GM12878 (cell line): ENCODE measurements at regions of chr19 and their contacts with region 1.

Region 1: DNA sequence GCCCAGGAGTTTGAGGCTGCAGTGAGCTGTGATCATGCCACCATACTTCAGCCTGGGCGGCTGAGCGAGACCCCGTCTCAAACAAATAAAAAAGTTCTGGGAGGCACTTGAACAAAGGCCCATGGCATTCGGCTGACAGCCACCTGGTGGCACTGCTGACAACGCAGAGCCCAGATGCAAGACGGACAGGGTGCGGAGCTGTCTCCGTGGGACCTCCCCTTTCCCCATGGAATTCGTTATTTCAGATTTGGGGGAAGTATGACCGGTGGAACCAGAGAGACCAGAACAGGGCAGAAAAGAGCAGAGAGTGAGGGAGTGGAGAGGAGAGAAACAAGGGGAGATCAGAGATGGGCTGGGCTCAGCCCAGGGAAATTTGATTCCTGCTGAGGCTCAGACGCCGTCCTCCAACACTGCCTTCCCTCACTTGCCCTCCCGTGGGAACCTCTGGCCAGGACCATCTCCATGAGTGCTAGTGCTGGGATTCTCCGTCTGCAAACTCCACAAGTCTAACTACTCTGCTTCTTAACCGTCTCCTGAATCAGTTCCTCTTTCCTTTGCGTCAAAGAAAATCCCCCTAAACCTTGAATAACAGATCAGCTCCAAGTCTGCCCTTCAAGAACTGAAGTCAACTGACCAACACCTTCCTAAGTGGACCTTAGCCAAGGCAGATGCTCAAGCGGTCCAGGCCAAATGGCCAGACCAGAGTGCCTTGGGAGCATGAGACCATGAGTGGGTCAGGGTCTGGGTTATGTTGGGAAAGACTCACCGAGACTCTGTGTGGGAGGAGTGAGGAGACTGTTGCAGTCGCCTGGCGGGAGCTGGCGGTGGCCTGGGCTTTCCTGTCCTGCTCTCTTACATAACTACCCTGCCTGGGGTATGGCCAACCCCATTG is 11.9 kb upstream of the ATF5 start:
- DNase-seq: no peak
- ATAC-seq: peak; percentile 45
- H3K4me3 ChIP-seq: no peak overlapping the region
- H3K27ac ChIP-seq: peak overlapping the region; percentile 67
- H3K4me1 ChIP-seq: peaks cover 43% of the 10 kb centered on the region
- H3K27me3 ChIP-seq: no peaks in the 10 kb centered on the region
- CTCF ChIP-seq: peak; percentile 17 to 46 (median 28); a peak in 2 of 6 replicates
- EP300 ChIP-seq: no peak
- POLR2A ChIP-seq: no peak
- RAD21 ChIP-seq: no peak

Region 2: GRCh38 chr19:49701271-49701786 is 215.8 kb before region 1 on chr19:
- CTCF ChIA-PET with region 1: no interaction called
- POLR2A ChIA-PET with region 1: no interaction called
- RAD21 ChIA-PET with region 1: no interaction called
- SMC1A ChIA-PET with region 1: no interaction called
- in situ Hi-C with region 1: no loop called
- intact Hi-C with region 1: no loop called
- DNase-seq: no peak
- ATAC-seq: no peak
- H3K4me3 ChIP-seq: no peak overlapping the region
- H3K27ac ChIP-seq: no peak overlapping the region
- H3K4me1 ChIP-seq: no peaks in the 10 kb centered on the region
- H3K27me3 ChIP-seq: no peaks in the 10 kb centered on the region
- CTCF ChIP-seq: no peak
- EP300 ChIP-seq: no peak
- POLR2A ChIP-seq: no peak
- RAD21 ChIP-seq: no peak

Region 3: GRCh38 chr19:49712397-49712859 is 204.7 kb before region 1 on chr19:
- CTCF ChIA-PET with region 1: no interaction called
- POLR2A ChIA-PET with region 1: no interaction called
- RAD21 ChIA-PET with region 1: no interaction called
- SMC1A ChIA-PET with region 1: no interaction called
- in situ Hi-C with region 1: no loop called
- intact Hi-C with region 1: no loop called
- DNase-seq: no peak
- ATAC-seq: no peak
- H3K4me3 ChIP-seq: no peak overlapping the region
- H3K27ac ChIP-seq: no peak overlapping the region
- H3K4me1 ChIP-seq: no peaks in the 10 kb centered on the region
- H3K27me3 ChIP-seq: no peaks in the 10 kb centered on the region
- CTCF ChIP-seq: no peak
- EP300 ChIP-seq: no peak
- POLR2A ChIP-seq: no peak
- RAD21 ChIP-seq: no peak

Region 4: GRCh38 chr19:49896863-49897621 is 20.0 kb before region 1 on chr19 and contains the start of gene IL4I1:
- CTCF ChIA-PET with region 1: interaction called, 71 read pairs
- POLR2A ChIA-PET with region 1: interaction called, 116 read pairs
- RAD21 ChIA-PET with region 1: interaction called, 38 read pairs
- SMC1A ChIA-PET with region 1: interaction called, 110 read pairs
- in situ Hi-C with region 1: no loop called
- intact Hi-C with region 1: no loop called
- DNase-seq: peak; percentile 96
- ATAC-seq: peak; percentile 57
- H3K4me3 ChIP-seq: peak within 1 kb of the TSS; percentile 77
- H3K27ac ChIP-seq: peak within 1 kb of the TSS; percentile 91
- H3K4me1 ChIP-seq: peaks cover 40% of the 10 kb centered on the region
- H3K27me3 ChIP-seq: no peaks in the 10 kb centered on the region
- CTCF ChIP-seq: no peak
- EP300 ChIP-seq: peak; percentile 42 to 81; a peak in 3 of 4 replicates
- POLR2A ChIP-seq: peak; percentile 69
- RAD21 ChIP-seq: no peak
- polyA plus RNA-seq, gene IL4I1: 0.62 to 1.00 TPM

Region 5: DNA sequence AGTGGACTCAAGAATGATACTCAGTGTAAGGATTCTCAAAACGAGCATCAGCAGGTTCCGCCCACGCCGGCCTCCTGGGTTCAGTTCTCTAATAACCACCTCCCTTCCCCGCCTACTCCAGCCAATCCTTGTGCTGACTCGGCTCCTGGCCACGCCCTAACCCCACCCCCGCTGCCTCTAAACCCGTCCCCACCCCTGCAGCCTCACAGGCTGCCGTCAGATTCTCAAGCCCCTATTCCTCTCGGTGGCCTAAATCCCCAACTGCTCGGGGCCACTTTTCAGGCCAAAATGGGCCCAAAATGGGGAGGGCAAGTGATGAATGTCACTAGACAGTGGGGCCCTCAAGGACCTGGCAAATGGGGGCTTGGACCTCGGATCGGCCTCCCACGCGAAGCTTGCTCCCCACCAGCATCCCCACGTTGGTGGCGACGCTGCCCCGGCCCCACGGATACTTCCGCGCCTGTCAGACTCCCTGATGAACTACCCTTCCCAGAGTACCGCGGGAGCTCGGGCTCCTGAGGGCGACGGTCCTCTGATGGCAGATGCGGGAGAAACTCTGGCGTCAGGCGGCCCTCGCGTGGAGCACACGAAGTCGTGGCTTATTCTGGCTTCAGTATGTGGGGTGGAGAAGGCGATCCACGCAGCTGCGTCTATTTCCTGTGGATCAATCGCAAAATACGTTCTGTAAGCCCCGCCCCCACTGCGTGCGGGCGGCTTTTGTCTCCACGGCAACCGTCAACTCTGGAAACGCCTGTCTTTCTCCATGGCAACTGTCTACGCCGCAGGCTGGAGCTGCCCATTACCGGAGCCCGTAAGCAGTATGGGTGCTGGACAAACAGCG is 133.5 kb after region 1 on chr19:
- CTCF ChIA-PET with region 1: no interaction called
- POLR2A ChIA-PET with region 1: no interaction called
- RAD21 ChIA-PET with region 1: no interaction called
- SMC1A ChIA-PET with region 1: no interaction called
- in situ Hi-C with region 1: no loop called
- intact Hi-C with region 1: no loop called
- DNase-seq: peak; percentile 23
- ATAC-seq: peak; percentile 94
- H3K4me3 ChIP-seq: peak overlapping the region; percentile 65
- H3K27ac ChIP-seq: no peak overlapping the region
- H3K4me1 ChIP-seq: peaks cover 7% of the 10 kb centered on the region; the same call in 1 of the 2 replicates
- H3K27me3 ChIP-seq: no peaks in the 10 kb centered on the region
- CTCF ChIP-seq: no peak
- EP300 ChIP-seq: no peak
- POLR2A ChIP-seq: no peak; the same call in 1 of the 2 replicates
- RAD21 ChIP-seq: no peak

Region 6: GRCh38 chr19:50061650-50062049 is 144.6 kb after region 1 on chr19:
- CTCF ChIA-PET with region 1: no interaction called
- POLR2A ChIA-PET with region 1: no interaction called
- RAD21 ChIA-PET with region 1: no interaction called
- SMC1A ChIA-PET with region 1: no interaction called
- in situ Hi-C with region 1: no loop called
- intact Hi-C with region 1: no loop called
- DNase-seq: no peak
- ATAC-seq: no peak
- H3K4me3 ChIP-seq: no peak overlapping the region
- H3K27ac ChIP-seq: no peak overlapping the region
- H3K4me1 ChIP-seq: no peaks in the 10 kb centered on the region
- H3K27me3 ChIP-seq: no peaks in the 10 kb centered on the region
- CTCF ChIP-seq: no peak
- EP300 ChIP-seq: no peak
- POLR2A ChIP-seq: no peak
- RAD21 ChIP-seq: no peak